PC-3 (cell line): ENCODE measurements at regions of chr20 and their contacts with region 1.

Region 1: GRCh38 chr20:37534401-37535157 is 6.9 kb upstream of the BLCAP start:
- DNase-seq: peak; percentile 96
- ATAC-seq: peak; percentile 67
- H3K4me3 ChIP-seq: no peak overlapping the region
- H3K27ac ChIP-seq: no peak overlapping the region
- H3K4me1 ChIP-seq: peaks cover 27% of the 10 kb centered on the region
- H3K27me3 ChIP-seq: no peaks in the 10 kb centered on the region
- CTCF ChIP-seq: peak; percentile 91

Region 2: GRCh38 chr20:37202267-37202943 is 332.2 kb before region 1 on chr20:
- CTCF ChIA-PET with region 1: no interaction called
- POLR2A ChIA-PET with region 1: no interaction called
- intact Hi-C with region 1: loop called (anchors 1 kb)
- DNase-seq: peak; percentile 88
- ATAC-seq: peak; percentile 99
- H3K4me3 ChIP-seq: 0 out of 2 replicates have a peak overlapping the region, but pooled peaks have one; percentile 3
- H3K27ac ChIP-seq: peak overlapping the region; percentile 12; the same call in 1 of the 2 replicates
- H3K4me1 ChIP-seq: peaks cover 16% of the 10 kb centered on the region
- H3K27me3 ChIP-seq: no peaks in the 10 kb centered on the region
- CTCF ChIP-seq: peak; percentile 93

Region 3: DNA sequence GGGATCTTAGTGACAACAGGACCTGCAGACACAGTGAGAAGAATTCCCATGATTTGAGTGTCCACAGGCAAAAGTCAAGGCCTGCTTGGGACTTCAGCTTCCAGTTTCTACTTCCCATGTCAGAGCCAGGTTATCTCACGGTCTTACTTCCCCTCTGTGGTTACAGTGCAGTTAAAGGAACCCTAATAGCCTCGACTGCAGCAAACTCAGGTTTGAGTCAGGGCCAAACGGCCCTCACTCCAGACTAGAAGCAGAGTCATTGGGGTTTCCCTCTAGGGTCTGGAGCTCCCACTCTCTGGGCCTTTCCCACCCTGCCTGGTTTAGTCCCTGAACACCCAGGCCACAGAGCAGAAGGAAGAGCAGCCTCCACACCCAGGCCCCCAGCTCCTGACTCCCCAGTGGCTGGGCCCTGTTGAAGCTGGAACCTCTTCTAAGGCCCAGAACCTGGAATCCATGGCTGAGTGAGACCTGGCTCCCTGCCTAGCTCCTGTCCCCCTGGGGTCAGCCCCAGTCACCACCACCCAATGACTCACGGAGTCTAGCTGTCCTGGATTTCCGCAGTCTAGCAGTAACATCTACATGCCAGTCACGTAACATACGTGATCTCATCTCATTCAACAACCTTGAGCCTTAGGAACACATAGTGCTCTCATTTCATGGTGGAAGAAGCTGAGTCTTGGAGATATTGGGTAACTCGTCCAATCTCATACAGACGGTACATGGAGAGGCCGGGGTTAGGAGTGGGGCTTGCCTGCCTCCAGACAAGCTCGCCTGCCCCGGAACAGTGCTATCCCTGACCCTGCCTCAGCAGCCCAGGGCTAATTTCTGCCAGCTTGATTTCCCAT is 263.8 kb before region 1 on chr20:
- CTCF ChIA-PET with region 1: interaction called, 5 read pairs
- POLR2A ChIA-PET with region 1: interaction called, 5 read pairs
- intact Hi-C with region 1: loop called (anchors 1 kb)
- DNase-seq: no peak
- ATAC-seq: no peak
- H3K4me3 ChIP-seq: no peak overlapping the region
- H3K27ac ChIP-seq: no peak overlapping the region
- H3K4me1 ChIP-seq: peaks cover 13% of the 10 kb centered on the region
- H3K27me3 ChIP-seq: no peaks in the 10 kb centered on the region
- CTCF ChIP-seq: no peak

Region 4: DNA sequence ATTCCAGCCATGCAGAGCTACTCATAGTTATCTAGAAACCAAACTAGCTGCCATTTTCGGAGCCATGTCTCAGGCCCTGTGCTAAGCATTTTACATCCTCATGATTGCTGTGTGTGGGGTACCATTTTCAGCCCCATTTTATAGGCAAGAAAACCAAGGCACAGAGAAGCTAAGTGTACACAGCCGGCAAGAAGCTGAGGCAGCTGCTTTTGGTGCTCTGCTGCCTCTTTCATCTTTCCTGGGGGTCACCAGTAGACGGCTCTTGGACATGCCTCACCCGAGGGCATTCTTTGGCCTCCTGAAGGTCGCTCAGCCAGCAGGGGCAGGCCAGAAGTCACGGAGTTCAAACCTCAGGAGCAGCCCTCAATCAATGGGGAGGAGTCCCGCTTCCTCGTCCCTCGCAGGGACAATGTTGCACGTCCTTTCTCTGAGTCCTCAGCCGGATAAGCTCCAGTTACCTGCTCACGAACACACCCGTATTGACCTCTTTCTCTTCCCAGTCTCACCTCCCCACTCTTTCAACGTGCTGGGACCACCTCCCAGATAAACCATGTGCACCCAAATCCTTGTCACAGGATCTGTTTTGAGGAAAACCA is 75.7 kb after region 1 on chr20:
- CTCF ChIA-PET with region 1: no interaction called
- POLR2A ChIA-PET with region 1: no interaction called
- intact Hi-C with region 1: no loop called
- DNase-seq: no peak
- ATAC-seq: no peak
- H3K4me3 ChIP-seq: no peak overlapping the region
- H3K27ac ChIP-seq: no peak overlapping the region
- H3K4me1 ChIP-seq: no peaks in the 10 kb centered on the region
- H3K27me3 ChIP-seq: peaks cover 12% of the 10 kb centered on the region; the same call in 1 of the 2 replicates
- CTCF ChIP-seq: no peak

Region 5: DNA sequence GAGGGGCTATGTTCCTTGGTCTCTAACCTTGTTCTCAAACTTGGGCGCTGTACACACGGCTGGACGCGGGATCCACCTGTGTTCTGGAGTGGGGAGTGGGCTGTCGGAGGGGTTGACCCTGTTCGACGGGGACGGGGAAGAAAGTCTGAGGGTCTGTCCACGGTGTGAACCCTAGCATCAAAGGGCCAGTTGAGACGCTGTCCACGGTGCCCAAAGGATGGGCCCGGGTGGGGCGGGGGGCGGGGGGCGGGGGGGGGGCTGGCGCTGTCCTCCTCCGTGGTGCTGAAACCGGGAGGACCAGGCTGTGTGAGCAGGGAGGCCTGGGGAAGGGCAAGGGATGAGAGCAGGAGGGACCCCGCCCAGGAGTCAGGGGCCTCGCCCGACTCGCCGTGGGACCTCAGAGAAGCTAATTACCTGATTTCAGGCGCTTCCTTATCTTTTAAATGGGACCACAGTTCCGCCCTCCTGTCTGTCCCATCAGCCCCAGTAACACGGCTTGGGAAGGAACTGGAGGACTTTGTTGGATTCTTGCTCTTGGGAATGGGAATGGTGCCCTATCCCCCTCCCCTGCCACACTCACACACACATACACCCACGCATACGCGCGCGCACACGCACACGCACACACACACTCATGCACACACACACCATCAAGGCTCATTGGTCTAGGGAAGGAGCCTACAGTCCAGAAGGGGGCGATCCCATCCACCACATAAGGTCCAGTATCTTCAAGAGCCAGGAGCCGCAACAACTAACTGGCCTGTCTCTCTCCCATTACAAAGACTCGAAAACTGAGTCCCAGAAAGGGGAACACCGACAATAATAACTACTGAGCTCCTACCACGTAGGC is 367.3 kb after region 1 on chr20:
- CTCF ChIA-PET with region 1: no interaction called
- POLR2A ChIA-PET with region 1: no interaction called
- intact Hi-C with region 1: no loop called
- DNase-seq: peak; percentile 74
- ATAC-seq: peak; percentile 70
- H3K4me3 ChIP-seq: peak overlapping the region; percentile 69
- H3K27ac ChIP-seq: no peak overlapping the region
- H3K4me1 ChIP-seq: peaks cover 6% of the 10 kb centered on the region
- H3K27me3 ChIP-seq: no peaks in the 10 kb centered on the region
- CTCF ChIP-seq: peak; percentile 83